Posterior vena cava (tissue), 2 donors: ENCODE measurements at regions of chr10 and their contacts with region 1.

Region 1: DNA sequence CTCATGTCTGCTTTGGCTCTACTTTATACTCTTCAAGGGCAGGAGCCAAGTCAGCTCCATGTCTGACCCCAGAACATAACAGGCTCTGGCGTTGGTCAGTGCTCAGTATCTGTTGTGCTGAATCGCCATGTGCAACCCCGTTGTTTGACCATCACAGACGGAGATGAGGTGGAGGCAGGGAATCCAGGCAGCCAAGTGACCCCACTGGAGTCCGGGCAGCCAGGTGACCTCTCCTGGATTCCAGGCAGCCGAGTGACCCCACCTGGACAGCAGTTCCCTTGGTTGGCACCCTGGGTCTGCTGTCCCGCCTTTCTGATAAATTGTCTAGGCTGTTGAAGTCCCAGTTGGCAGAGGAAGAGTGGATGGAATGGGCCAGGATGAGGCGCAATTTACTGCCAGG is 232.2 kb downstream of the TCERG1L start:
- DNase-seq: no peak

Region 2: DNA sequence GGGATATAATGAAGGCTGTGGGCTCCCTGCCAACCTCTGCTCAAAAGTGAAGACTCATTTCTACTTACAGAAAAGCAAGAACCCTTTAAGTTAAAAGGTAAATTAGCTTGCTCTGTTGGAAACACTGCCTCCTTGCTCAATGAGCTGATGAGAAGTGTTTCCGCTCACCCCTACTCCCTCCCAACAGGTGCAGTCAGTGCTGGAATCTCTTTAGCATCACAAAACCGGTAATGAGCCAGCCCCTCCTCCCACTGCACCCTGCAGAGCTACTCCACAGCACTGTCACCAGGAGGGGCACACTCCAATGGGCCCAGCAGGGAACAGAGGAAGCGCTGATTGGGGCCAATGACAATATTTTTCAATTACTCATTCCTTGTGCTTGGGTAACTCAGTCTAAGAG is 30.3 kb before region 1 on chr10:
- intact Hi-C with region 1: no loop called
- DNase-seq: no peak

Region 3: GRCh38 chr10:131134001-131134575 is 54.8 kb after region 1 on chr10:
- intact Hi-C with region 1: loop called in 1 of 2 experiments (anchors 1 kb)
- DNase-seq: peak; percentile 54